CD8-positive, alpha-beta memory T cell (primary cell): ENCODE measurements at regions of chrX and their contacts with region 1.

Region 1: DNA sequence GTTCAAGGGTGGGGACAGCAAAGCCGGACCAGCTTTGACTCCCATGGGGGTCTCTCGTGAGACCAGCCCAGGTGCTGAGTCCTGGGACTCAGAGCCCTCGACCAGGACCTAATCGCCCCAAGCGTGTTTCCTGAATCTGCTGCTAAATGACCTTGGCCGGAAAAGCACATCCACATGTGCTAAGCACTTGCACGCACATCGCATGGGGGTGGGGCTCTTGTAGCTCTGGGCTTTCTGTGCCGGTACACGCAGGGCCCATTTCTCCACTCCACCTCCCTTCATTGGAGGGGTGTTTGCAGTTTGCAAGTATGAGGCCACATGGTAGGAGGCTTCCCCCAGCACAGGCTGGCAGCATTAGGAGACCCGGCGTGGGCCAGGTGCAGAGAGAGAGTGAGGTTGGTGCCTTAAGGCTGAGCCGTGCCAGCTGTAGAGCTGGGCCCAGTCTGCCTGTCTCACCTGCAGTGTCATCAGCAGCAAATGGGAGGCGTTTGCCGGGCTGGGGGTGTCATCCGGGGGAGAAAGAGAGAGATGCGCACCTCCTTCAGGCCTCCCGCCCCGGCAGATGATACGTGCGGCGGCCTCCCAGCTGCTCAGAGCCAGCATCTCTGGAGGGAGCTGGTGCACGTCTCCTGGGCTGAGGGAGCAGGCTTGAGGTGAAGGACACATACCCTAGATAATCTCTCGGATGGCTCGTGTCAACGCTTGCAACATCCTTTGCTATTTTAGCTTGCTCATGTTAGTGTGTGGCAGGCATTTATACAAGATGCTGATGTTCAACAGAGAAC is 45.2 kb upstream of the CLCN4 start:
- DNase-seq: peak; percentile 23 to 86 (median 63)
- H3K4me3 ChIP-seq: peak overlapping the region; percentile 56
- H3K4me3 Mint-ChIP-seq: peak overlapping the region; percentile 75 to 91 (median 87)
- H3K27ac ChIP-seq: peak overlapping the region; percentile 68
- H3K27ac Mint-ChIP-seq: peak overlapping the region; percentile 96 to 100 (median 98)
- H3K4me1 ChIP-seq: peaks cover 68% of the 10 kb centered on the region
- H3K4me1 Mint-ChIP-seq: peaks cover 51 to 80% (median 74%) of the 10 kb centered on the region in 3 donors
- H3K27me3 ChIP-seq: no peaks in the 10 kb centered on the region
- H3K27me3 Mint-ChIP-seq: peaks cover 0 to 2% of the 10 kb centered on the region in 2 donors

Region 2: DNA sequence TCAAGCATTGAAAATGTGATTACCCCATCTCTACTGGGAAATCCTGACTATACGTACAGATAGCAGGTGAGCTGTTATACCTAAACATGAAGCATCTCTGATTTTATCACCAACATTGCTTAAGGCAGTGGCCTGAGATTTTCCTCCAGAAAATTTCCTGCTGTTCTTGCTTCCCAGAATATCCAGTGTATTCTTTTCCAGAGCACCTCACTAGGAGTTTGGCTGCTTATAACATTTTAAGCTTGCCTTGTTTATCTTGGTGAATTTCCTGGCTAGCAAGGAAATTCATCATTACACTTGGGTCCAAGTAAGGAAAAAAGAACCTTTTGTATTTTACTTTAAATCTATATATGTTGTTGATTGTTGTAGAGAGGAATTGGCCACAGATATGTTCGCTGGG is 27.7 kb before region 1 on chrX:
- CTCF ChIA-PET with region 1: interaction called, 8 read pairs
- POLR2A ChIA-PET with region 1: interaction called, 35 read pairs
- DNase-seq: no peak
- H3K4me3 ChIP-seq: no peak overlapping the region
- H3K4me3 Mint-ChIP-seq: peak overlapping the region in 2 of 7 donors; percentile 75 to 79
- H3K27ac ChIP-seq: no peak overlapping the region
- H3K27ac Mint-ChIP-seq: peak overlapping the region; percentile 89 to 98 (median 96)
- H3K4me1 ChIP-seq: peaks cover 35% of the 10 kb centered on the region
- H3K4me1 Mint-ChIP-seq: peaks cover 37 to 55% (median 53%) of the 10 kb centered on the region in 3 donors
- H3K27me3 ChIP-seq: no peaks in the 10 kb centered on the region
- H3K27me3 Mint-ChIP-seq: peaks cover 0 to 3% of the 10 kb centered on the region in 2 donors

Region 3: GRCh38 chrX:10098270-10098713 is 13.3 kb before region 1 on chrX:
- CTCF ChIA-PET with region 1: interaction called, 10 read pairs
- POLR2A ChIA-PET with region 1: interaction called, 19 read pairs
- DNase-seq: peak in 4 of 5 donors; percentile 43 to 71 (median 61)
- H3K4me3 ChIP-seq: peak overlapping the region; percentile 72
- H3K4me3 Mint-ChIP-seq: peak overlapping the region; percentile 89 to 99 (median 92)
- H3K27ac ChIP-seq: peak overlapping the region; percentile 59
- H3K27ac Mint-ChIP-seq: peak overlapping the region; percentile 88 to 98 (median 94)
- H3K4me1 ChIP-seq: peaks cover 29% of the 10 kb centered on the region
- H3K4me1 Mint-ChIP-seq: peaks cover 38 to 65% (median 64%) of the 10 kb centered on the region in 3 donors
- H3K27me3 ChIP-seq: no peaks in the 10 kb centered on the region
- H3K27me3 Mint-ChIP-seq: no peaks in the 10 kb centered on the region